Testis (tissue), 5 donors: ENCODE measurements at regions of chr2 and their contacts with region 1.

Region 1: GRCh38 chr2:219521066-219521880 is 7.0 kb downstream of the ASIC4 start:
- DNase-seq: peak; percentile 71
- H3K4me3 ChIP-seq: no peak overlapping the region
- H3K27ac ChIP-seq: no peak overlapping the region
- H3K4me1 ChIP-seq: peaks cover 11% of the 10 kb centered on the region
- H3K27me3 ChIP-seq: no peaks in the 10 kb centered on the region
- CTCF ChIP-seq: peak; percentile 49 to 61 (median 57)
- POLR2A ChIP-seq: no peak

Region 2: DNA sequence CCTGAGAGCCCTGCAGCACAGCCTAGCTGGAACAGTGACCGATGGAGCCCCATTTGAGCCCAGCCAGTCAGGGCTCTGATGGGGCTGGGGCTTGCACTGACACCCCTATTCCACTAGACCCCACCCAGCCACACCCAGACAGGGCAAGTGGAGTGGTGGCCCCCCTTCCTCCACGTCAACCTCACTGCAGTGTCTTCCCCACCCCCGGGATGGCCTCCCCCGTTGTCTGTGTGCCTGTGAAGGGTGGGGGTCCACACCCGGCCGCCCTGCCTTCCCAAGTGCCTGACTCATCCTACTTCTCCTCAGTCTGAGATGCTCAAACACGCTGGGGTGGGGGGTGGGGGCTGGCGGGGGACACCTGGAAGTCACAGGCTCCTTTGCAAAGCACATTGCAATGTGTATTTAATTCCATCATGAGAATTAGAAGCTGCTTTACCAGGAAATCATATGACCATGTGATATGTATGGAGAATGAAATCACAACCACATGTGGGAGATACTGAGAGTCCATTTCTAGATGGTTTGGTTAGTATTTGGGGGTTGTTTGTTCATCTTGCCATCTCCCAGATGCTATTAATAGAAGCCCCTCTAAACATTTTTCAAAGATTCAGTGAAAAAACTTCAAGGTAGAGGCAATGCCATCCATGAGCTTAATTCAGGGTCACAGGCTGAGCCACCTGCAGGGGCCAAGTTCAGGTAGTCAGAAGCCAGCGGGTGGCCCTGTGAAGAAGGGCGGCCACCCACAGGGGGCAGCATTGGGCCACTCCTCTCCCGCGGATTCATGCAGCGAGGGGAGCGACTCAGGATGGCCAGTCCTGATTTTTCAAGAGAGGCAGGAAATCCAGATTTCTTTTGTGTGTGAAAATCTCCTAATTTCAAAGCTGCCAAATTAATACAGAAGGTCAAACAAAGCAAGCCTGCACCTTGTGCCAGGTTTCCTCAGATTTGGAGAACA is 45.3 kb before region 1 on chr2:
- intact Hi-C with region 1: loop called (anchors 10 kb)
- DNase-seq: peak; percentile 85
- H3K4me3 ChIP-seq: no peak overlapping the region
- H3K27ac ChIP-seq: no peak overlapping the region
- H3K4me1 ChIP-seq: peaks cover 9% of the 10 kb centered on the region
- H3K27me3 ChIP-seq: no peaks in the 10 kb centered on the region
- CTCF ChIP-seq: peak; percentile 75 to 84 (median 79)
- POLR2A ChIP-seq: no peak